Colonic mucosa (tissue), 4 donors: ENCODE measurements at regions of chr3 and their contacts with region 1.

Region 1: GRCh38 chr3:133927540-133928066 is 31.9 kb upstream of the RAB6B start:
- DNase-seq: peak; percentile 56
- H3K4me3 ChIP-seq: peak overlapping the region; percentile 22
- H3K27ac ChIP-seq: no peak overlapping the region
- H3K4me1 ChIP-seq: no peaks in the 10 kb centered on the region
- H3K27me3 ChIP-seq: no peaks in the 10 kb centered on the region
- CTCF ChIP-seq: peak; percentile 68

Region 2: DNA sequence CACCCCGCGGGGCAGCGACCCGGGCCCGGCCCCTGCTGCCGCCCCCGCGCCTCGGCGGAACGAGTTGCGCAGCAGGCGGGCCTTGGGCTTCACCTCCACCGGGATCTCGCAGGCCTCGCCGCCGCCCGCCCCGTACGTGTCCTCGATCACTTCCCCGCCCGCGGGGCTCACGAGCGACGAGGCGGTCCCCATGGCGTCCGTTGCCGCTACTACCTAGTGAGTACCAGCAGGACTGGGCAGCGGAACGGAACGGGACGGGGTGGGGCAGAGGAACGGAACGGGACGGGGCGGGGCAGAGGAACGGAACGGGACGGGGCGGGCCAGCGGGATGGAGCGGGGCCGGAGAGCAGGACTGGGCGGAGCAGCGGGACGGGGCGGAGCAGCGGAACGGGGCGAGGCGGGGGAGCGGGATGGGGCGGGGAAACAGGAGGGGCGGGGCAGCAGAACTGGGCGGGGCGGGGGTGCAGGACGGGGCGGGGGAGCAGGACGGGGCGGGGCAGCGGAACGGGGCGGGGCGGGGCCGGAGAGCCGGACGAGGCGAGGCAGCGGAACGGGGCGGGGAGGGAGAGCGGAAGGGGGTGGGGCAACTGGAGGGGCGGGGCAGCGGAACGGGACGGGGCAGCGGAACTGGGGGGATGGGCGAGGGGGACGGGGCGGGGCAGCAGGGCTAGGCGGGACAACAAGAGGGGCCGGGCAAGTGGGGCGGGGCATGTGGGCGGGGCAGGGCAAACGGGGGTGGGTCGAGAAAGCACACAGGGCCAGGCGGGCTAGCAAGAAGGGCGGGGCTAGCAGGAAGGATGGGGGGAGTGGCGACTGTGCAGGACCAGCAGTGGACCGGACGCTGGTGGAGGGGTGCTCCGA is 1205.2 kb before region 1 on chr3 and contains the start of gene NPHP3:
- intact Hi-C with region 1: loop called (anchors 10 kb)
- DNase-seq: peak; percentile 99
- H3K4me3 ChIP-seq: peak within 1 kb of the TSS; percentile 94
- H3K27ac ChIP-seq: peak within 1 kb of the TSS; percentile 98
- H3K4me1 ChIP-seq: peaks cover 5% of the 10 kb centered on the region
- H3K27me3 ChIP-seq: no peaks in the 10 kb centered on the region
- CTCF ChIP-seq: no peak
- total RNA-seq, gene NPHP3: 10.7 to 16.4 TPM

Region 3: GRCh38 chr3:133661454-133662277 is 265.9 kb before region 1 on chr3 and contains the start of gene TOPBP1:
- intact Hi-C with region 1: loop called (anchors 5 kb)
- DNase-seq: peak; percentile 92
- H3K4me3 ChIP-seq: peak within 1 kb of the TSS; percentile 95
- H3K27ac ChIP-seq: peak within 1 kb of the TSS; percentile 76
- H3K4me1 ChIP-seq: peaks cover 5% of the 10 kb centered on the region
- H3K27me3 ChIP-seq: no peaks in the 10 kb centered on the region
- CTCF ChIP-seq: no peak
- total RNA-seq, gene TOPBP1: 21.7 to 34.6 TPM

Region 4: GRCh38 chr3:133717424-133717823 is 210.2 kb before region 1 on chr3:
- intact Hi-C with region 1: no loop called
- DNase-seq: no peak
- H3K4me3 ChIP-seq: no peak overlapping the region
- H3K27ac ChIP-seq: no peak overlapping the region
- H3K4me1 ChIP-seq: no peaks in the 10 kb centered on the region
- H3K27me3 ChIP-seq: no peaks in the 10 kb centered on the region
- CTCF ChIP-seq: no peak

Region 5: DNA sequence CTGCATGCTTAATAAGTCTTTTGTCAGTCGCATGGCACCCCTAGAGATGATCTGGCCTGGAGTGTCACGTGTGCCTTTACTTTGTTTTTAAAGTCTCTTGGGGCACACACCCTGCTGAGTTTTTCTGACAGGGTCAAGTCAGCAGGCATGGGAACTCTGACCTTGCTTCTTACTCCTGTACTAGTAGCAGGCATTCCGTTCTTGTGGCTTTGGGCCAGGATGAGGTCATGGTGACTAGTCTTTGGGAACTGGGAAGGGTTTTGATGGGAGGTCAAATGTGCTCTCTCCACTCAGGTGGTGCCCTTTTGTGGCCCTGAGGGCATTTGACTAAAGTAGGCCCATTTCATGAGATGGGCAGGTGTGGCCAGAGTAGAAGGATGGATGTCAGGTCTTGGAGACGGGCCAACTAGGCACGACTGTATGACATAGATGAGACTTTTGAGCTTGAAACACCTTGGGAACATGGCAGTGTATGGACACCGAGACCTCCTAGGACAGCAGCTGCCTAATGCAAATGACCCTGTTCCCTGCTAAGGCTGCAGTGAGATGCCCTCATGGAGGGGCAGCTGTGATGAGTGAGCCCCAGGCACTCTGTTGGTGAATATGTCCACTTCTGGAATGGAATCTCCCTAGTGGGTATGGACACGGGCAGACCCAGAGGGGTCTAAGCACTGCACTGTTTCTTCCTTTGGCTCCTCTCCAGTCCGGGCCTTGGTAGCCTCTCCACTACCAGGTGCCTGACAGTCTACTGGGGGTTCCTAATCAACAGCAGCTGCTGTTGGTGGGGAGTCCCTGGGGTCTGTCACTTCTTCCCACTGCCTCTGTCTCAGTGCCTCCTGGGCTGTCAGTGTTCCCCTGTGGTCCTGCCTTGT is 105.6 kb before region 1 on chr3:
- intact Hi-C with region 1: loop called (anchors 2 kb)
- DNase-seq: peak; percentile 34
- H3K4me3 ChIP-seq: no peak overlapping the region
- H3K27ac ChIP-seq: no peak overlapping the region
- H3K4me1 ChIP-seq: no peaks in the 10 kb centered on the region
- H3K27me3 ChIP-seq: no peaks in the 10 kb centered on the region
- CTCF ChIP-seq: no peak

Region 6: GRCh38 chr3:134059671-134060560 is 132.3 kb after region 1 on chr3:
- intact Hi-C with region 1: loop called (anchors 2 kb)
- DNase-seq: peak; percentile 52
- H3K4me3 ChIP-seq: no peak overlapping the region
- H3K27ac ChIP-seq: no peak overlapping the region
- H3K4me1 ChIP-seq: peaks cover 8% of the 10 kb centered on the region
- H3K27me3 ChIP-seq: no peaks in the 10 kb centered on the region
- CTCF ChIP-seq: no peak

Region 7: GRCh38 chr3:134212906-134213665 is 285.5 kb after region 1 on chr3:
- intact Hi-C with region 1: loop called (anchors 5 kb)
- DNase-seq: peak; percentile 92
- H3K4me3 ChIP-seq: no peak overlapping the region
- H3K27ac ChIP-seq: no peak overlapping the region
- H3K4me1 ChIP-seq: no peaks in the 10 kb centered on the region
- H3K27me3 ChIP-seq: no peaks in the 10 kb centered on the region
- CTCF ChIP-seq: peak; percentile 93

Region 8: GRCh38 chr3:134419214-134419959 is 491.8 kb after region 1 on chr3:
- intact Hi-C with region 1: no loop called
- DNase-seq: no peak
- H3K4me3 ChIP-seq: no peak overlapping the region
- H3K27ac ChIP-seq: no peak overlapping the region
- H3K4me1 ChIP-seq: no peaks in the 10 kb centered on the region
- H3K27me3 ChIP-seq: no peaks in the 10 kb centered on the region
- CTCF ChIP-seq: no peak